ENCODE measurements at regions of chr5 and their contacts with region 1.

Region 1: DNA sequence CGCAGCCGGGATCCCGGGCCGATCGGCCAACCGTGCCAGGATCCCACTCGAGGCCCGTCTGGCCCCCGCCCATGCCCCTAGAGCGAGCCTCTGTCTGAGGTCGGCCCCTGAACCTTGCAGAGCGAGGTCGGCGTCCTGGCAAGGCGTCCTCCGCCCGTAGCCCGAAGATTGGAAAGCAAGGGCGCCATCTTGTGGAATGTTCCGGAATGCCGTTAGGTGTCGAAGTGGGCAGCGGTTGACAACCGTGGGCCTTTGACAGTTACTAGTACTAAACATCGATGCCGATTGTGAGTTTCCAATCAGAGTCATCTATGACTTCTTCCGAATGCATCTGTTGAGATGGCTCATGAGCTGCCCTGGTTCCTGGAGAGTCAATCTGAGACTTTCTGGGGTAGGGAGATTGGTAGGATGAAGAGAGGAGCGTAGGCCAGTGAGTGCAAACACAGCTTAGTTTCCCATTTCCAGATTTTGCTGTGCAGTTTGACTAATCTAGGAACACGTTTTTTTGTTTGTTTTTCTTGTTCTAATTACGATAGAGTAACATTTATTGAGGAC is 923 bp upstream of the PLK2 start:
- DNase-seq: peak; percentile 91
- H3K4me3 ChIP-seq: peak overlapping the region; percentile 34 to 94 (median 92)
- H3K27ac ChIP-seq: peak overlapping the region; percentile 87
- H3K4me1 ChIP-seq: peaks cover 25% of the 10 kb centered on the region
- H3K27me3 ChIP-seq: no peaks in the 10 kb centered on the region
- CTCF ChIP-seq: peak; percentile 72 to 82
- POLR2A ChIP-seq: no peak

Region 2: GRCh38 chr5:57383093-57383861 is 1077.5 kb before region 1 on chr5:
- CTCF ChIA-PET with region 1: no interaction called
- POLR2A ChIA-PET with region 1: no interaction called
- dilution Hi-C with region 1: no loop called
- intact Hi-C with region 1: loop called (anchors 2 kb)
- DNase-seq: peak; percentile 96
- H3K4me3 ChIP-seq: peak overlapping the region in 1 of 3 experiments; percentile 40
- H3K27ac ChIP-seq: peak overlapping the region; percentile 94
- H3K4me1 ChIP-seq: peaks cover 19% of the 10 kb centered on the region
- H3K27me3 ChIP-seq: no peaks in the 10 kb centered on the region
- CTCF ChIP-seq: peak in 1 of 2 donors; percentile 33
- POLR2A ChIP-seq: peak; percentile 60

Region 3: GRCh38 chr5:57499262-57500050 is 961.4 kb before region 1 on chr5:
- CTCF ChIA-PET with region 1: interaction called, 96 read pairs
- POLR2A ChIA-PET with region 1: interaction called, 13 read pairs
- dilution Hi-C with region 1: loop called (anchors 25 kb)
- intact Hi-C with region 1: loop called (anchors 1 kb)
- DNase-seq: peak; percentile 94
- H3K4me3 ChIP-seq: no peak overlapping the region
- H3K27ac ChIP-seq: no peak overlapping the region
- H3K4me1 ChIP-seq: peaks cover 37% of the 10 kb centered on the region
- H3K27me3 ChIP-seq: no peaks in the 10 kb centered on the region
- CTCF ChIP-seq: peak; percentile 62 to 66
- POLR2A ChIP-seq: no peak

Region 4: DNA sequence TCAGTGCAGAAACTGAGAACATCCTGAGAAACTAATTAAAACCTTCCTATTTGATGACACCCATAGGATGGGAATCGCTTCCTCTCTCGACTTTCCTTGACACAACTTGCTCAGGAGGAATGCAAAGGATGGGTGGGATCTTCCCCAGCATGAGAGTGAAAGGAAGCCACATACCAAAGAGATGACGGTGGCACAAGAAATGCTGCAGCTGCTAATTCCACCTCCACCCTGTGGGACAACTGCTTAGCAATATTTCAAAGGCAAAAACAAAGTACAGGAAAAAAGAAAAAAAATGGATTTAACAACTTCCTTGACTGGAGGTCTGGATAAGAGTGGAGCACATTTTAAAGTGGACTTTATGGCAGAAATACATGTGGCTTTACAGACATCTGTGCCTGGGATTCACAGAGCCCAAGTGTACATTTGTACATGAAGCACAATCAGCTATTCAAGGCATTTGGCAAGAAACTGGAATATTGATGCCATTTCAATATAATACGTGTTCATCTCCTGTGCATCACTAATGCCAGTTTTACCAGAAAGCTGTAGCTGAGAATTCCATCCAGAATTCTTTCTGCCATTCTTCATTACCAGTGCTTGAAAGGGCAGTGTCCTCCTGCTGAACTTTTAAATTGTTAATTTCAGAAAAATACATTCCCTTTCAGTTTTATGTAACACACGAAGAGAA is 619.0 kb before region 1 on chr5:
- CTCF ChIA-PET with region 1: interaction called, 3 read pairs
- POLR2A ChIA-PET with region 1: interaction called, 4 read pairs
- dilution Hi-C with region 1: no loop called
- intact Hi-C with region 1: loop called (anchors 1 kb)
- DNase-seq: peak; percentile 96
- H3K4me3 ChIP-seq: no peak overlapping the region
- H3K27ac ChIP-seq: peak overlapping the region; percentile 90
- H3K4me1 ChIP-seq: peaks cover 66% of the 10 kb centered on the region
- H3K27me3 ChIP-seq: no peaks in the 10 kb centered on the region
- CTCF ChIP-seq: no peak
- POLR2A ChIP-seq: no peak

Region 5: DNA sequence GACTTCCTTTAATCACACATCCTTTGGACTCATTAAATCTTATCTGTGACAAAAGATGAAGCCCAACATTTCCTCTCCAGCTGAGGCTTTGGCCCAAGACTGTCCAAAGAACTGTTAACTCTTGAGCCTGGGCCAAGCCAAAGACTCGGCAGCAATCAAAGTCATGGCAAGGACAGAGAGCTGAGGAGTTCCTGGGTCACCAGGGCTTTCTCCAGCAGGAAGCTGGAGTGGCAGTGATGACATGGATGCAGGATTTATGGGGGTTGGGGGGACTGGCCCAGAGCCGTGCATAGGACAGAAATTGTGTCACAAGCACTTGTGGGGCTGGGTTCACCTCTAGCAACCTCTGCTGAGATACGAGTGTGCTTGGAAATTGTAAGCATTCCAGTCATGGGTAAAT is 441.2 kb before region 1 on chr5:
- CTCF ChIA-PET with region 1: interaction called, 3 read pairs
- POLR2A ChIA-PET with region 1: interaction called, 6 read pairs
- dilution Hi-C with region 1: no loop called
- intact Hi-C with region 1: loop called (anchors 1 kb)
- DNase-seq: peak; percentile 93
- H3K4me3 ChIP-seq: no peak overlapping the region
- H3K27ac ChIP-seq: no peak overlapping the region
- H3K4me1 ChIP-seq: peaks cover 18% of the 10 kb centered on the region
- H3K27me3 ChIP-seq: no peaks in the 10 kb centered on the region
- CTCF ChIP-seq: no peak
- POLR2A ChIP-seq: no peak

Region 6: DNA sequence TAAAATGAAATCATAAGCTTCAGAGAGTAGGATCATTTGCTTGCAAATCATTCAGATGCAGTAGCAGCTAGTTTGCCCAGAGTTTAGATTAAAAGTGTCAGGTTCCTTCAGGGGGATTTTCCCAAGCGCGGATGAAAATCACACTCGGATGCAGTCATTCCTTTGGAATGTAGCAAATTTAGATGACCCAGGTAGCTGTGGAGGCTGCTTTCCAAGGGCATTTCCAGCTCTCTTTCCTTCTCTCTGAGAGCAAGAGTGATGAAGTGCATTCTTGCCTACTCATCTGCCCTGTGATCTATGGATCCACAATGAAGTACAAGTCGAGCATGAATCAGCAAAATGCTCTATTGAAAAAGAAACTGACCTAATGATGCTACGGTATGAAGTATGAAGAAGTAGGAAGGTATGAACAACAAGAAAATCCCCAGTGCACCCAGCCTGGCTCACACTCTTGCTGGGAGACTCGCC is 201.1 kb before region 1 on chr5:
- CTCF ChIA-PET with region 1: interaction called, 10 read pairs
- POLR2A ChIA-PET with region 1: interaction called, 8 read pairs
- dilution Hi-C with region 1: no loop called
- intact Hi-C with region 1: no loop called
- DNase-seq: peak; percentile 85
- H3K4me3 ChIP-seq: peak overlapping the region in 1 of 3 experiments; percentile 20
- H3K27ac ChIP-seq: peak overlapping the region; percentile 91
- H3K4me1 ChIP-seq: peaks cover 26% of the 10 kb centered on the region
- H3K27me3 ChIP-seq: no peaks in the 10 kb centered on the region
- CTCF ChIP-seq: no peak
- POLR2A ChIP-seq: peak; percentile 42

Region 7: DNA sequence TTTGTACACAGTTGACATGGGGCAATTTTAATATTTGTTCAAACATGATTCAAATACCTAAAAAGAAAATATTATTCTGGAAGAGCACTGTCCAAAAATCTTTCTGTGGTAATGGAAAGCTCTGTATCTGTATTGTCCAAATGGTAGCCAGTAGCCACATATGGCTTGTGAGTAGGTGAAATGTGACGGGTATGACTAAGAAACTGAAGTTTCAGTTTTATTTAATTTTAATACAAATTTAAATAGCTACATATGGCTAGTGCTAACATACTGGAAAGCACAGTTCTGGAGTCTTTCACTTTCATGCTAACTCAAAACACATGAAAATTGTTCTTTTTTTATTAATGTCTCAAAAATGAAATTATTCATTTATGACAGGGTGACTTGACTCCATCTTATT is 133.5 kb before region 1 on chr5:
- CTCF ChIA-PET with region 1: no interaction called
- POLR2A ChIA-PET with region 1: no interaction called
- dilution Hi-C with region 1: no loop called
- intact Hi-C with region 1: no loop called
- DNase-seq: no peak
- H3K4me3 ChIP-seq: no peak overlapping the region
- H3K27ac ChIP-seq: no peak overlapping the region
- H3K4me1 ChIP-seq: peaks cover 8% of the 10 kb centered on the region
- H3K27me3 ChIP-seq: no peaks in the 10 kb centered on the region
- CTCF ChIP-seq: no peak
- POLR2A ChIP-seq: no peak

Region 8: DNA sequence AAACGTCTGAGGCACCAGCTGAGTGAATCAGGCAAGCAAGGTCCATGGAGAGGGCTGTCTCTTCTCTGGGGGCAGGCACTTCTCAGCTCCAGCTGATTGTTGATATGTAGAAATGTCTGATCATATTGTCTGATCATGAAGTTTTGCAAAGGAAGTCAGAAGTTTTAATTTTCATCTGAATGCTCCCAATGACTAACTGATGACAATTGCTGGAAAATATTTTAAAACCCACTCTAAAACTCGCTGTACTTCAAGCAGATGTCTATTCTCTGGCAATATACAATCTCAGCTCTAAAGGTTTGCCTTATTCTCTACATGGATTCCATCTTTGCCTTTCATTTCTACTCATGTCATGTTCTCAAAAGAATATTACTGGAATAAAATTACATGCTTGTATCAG is 13.6 kb before region 1 on chr5:
- CTCF ChIA-PET with region 1: interaction called, 3 read pairs
- POLR2A ChIA-PET with region 1: interaction called, 15 read pairs
- dilution Hi-C with region 1: no loop called
- intact Hi-C with region 1: no loop called
- DNase-seq: no peak
- H3K4me3 ChIP-seq: no peak overlapping the region
- H3K27ac ChIP-seq: no peak overlapping the region
- H3K4me1 ChIP-seq: no peaks in the 10 kb centered on the region
- H3K27me3 ChIP-seq: no peaks in the 10 kb centered on the region
- CTCF ChIP-seq: no peak
- POLR2A ChIP-seq: no peak

Region 9: GRCh38 chr5:58475404-58475803 is 14.6 kb after region 1 on chr5:
- CTCF ChIA-PET with region 1: no interaction called
- POLR2A ChIA-PET with region 1: no interaction called
- dilution Hi-C with region 1: no loop called
- intact Hi-C with region 1: no loop called
- DNase-seq: no peak
- H3K4me3 ChIP-seq: no peak overlapping the region
- H3K27ac ChIP-seq: no peak overlapping the region
- H3K4me1 ChIP-seq: no peaks in the 10 kb centered on the region
- H3K27me3 ChIP-seq: peaks cover 0 to 6% of the 10 kb centered on the region in 2 experiments
- CTCF ChIP-seq: no peak
- POLR2A ChIP-seq: no peak

Measured in endothelial cell of umbilical vein (primary cell).